H1 (cell line): ENCODE measurements at regions of chr9 and their contacts with region 1.

Region 1: DNA sequence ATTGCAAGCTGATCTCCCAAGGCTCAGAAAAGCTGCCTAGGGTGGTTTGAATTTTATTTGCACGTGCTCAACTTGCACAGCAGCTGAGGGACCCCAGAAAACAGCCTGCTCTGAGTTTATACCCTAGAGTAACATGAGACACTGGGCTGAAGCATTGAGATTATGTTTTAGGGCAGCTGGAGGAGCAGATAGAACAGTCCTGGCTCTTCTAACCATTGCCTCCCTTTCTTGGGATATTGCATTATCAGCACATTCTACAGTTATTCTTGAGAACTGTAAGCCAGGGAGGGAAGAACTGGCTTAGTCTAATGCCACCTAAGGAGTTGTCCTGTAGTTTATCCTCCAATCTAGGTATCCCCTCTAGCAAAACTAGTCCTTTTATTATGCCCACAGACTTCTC is 10.3 kb downstream of the SMC2 start:
- DNase-seq: no peak
- H3K4me3 ChIP-seq: no peak overlapping the region
- H3K27ac ChIP-seq: no peak overlapping the region
- H3K4me1 ChIP-seq: no peaks in the 10 kb centered on the region
- H3K27me3 ChIP-seq: no peaks in the 10 kb centered on the region
- CTCF ChIP-seq: no peak
- EP300 ChIP-seq: no peak
- POLR2A ChIP-seq: no peak
- RAD21 ChIP-seq: no peak

Region 2: GRCh38 chr9:104068546-104068945 is 35.8 kb before region 1 on chr9:
- CTCF ChIA-PET with region 1: no interaction called
- POLR2A ChIA-PET with region 1: no interaction called
- DNase-seq: no peak
- H3K4me3 ChIP-seq: no peak overlapping the region
- H3K27ac ChIP-seq: no peak overlapping the region
- H3K4me1 ChIP-seq: no peaks in the 10 kb centered on the region
- H3K27me3 ChIP-seq: no peaks in the 10 kb centered on the region
- CTCF ChIP-seq: no peak
- EP300 ChIP-seq: no peak
- POLR2A ChIP-seq: no peak
- RAD21 ChIP-seq: no peak

Region 3: GRCh38 chr9:104093647-104094533 is 10.5 kb before region 1 on chr9 and contains the start of gene SMC2:
- CTCF ChIA-PET with region 1: no interaction called
- POLR2A ChIA-PET with region 1: interaction called, 15 read pairs
- DNase-seq: peak; percentile 58 to 94
- H3K4me3 ChIP-seq: peak within 1 kb of the TSS; percentile 84 to 98 (median 86)
- H3K27ac ChIP-seq: peak within 1 kb of the TSS; percentile 94
- H3K4me1 ChIP-seq: peaks cover 0 to 8% (median 2%) of the 10 kb centered on the region in 4 experiments; a peak in 3 of 7 replicates
- H3K27me3 ChIP-seq: no peaks in the 10 kb centered on the region
- CTCF ChIP-seq: no peak
- EP300 ChIP-seq: no peak
- POLR2A ChIP-seq: peak; percentile 71 to 92
- RAD21 ChIP-seq: no peak
- total RNA-seq, gene SMC2: 37.7 and 39.8 TPM in 2 replicates

Region 4: DNA sequence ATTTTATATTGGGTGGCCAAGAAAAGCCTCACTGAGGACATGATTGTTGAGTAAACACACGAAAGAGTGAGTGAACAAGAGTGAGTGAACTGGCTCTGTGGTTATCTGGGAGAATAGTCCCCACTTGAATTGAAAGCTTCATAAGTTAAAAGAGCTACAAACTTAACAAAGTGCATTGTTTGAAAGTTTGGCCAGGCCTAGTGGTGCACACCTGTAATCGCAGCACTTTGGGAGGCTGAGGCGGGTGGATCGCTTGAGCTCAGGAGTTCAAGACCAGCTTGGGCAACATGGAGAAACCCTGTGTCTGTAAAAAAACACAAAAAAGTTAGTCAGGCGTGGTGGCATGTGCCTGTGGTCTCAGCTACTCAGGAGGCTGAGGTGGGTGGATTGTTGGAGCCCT is 16.7 kb after region 1 on chr9:
- CTCF ChIA-PET with region 1: interaction called, 10 read pairs
- POLR2A ChIA-PET with region 1: no interaction called
- DNase-seq: no peak
- H3K4me3 ChIP-seq: no peak overlapping the region
- H3K27ac ChIP-seq: no peak overlapping the region
- H3K4me1 ChIP-seq: no peaks in the 10 kb centered on the region
- H3K27me3 ChIP-seq: no peaks in the 10 kb centered on the region; a peak in 1 of 7 replicates
- CTCF ChIP-seq: peak in 2 of 3 experiments; percentile 2 to 6; a peak in 2 of 4 replicates
- EP300 ChIP-seq: no peak
- POLR2A ChIP-seq: no peak
- RAD21 ChIP-seq: peak; percentile 9 to 22; a peak in 1 of 4 replicates

Region 5: DNA sequence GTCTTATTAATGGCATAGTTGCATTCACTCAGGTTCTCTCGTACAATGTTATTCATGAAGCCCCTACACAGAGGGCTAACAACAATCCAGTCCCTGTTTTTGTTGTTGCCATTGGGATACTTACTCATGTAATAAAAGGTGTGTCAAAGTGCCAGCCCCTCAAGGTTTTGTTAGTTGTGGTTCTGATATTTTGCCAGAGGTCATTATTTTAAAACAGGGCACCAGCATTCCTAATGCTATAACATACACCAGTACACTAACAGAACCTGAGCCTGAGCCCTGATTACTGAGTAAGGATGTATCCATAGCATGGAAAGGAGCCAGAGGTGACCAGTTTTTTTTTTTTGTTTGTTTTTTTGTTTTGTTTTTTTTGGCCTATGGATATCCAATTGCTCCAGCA is 40.0 kb after region 1 on chr9:
- CTCF ChIA-PET with region 1: no interaction called
- POLR2A ChIA-PET with region 1: no interaction called
- DNase-seq: no peak
- H3K4me3 ChIP-seq: no peak overlapping the region
- H3K27ac ChIP-seq: no peak overlapping the region
- H3K4me1 ChIP-seq: no peaks in the 10 kb centered on the region
- H3K27me3 ChIP-seq: no peaks in the 10 kb centered on the region
- CTCF ChIP-seq: no peak
- EP300 ChIP-seq: no peak
- POLR2A ChIP-seq: no peak
- RAD21 ChIP-seq: no peak